ENCODE measurements at regions of chr10 and their contacts with region 1.

Region 1: DNA sequence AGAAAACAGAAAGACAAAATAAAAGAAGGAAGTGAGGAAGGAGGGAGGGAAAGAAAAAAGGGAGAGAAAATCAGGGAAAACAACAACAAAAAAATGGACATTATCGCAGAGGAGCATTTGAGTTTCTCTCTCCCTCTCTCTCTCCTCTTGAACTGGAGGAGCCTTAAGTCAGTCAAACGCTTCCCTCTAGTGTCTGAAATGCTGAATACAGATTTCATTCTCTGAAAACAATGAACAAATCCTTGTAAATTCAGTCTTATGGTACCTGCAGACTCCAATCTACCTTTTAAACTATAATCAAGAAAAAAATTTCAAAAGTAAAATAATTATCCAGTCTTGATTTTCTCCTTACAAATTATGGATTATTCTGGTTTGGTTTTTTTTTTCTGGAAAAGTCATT is 89.2 kb upstream of the PFKP start:
- DNase-seq: peak; percentile 50
- H3K4me3 ChIP-seq: no peak overlapping the region
- H3K27ac ChIP-seq: no peak overlapping the region
- H3K4me1 ChIP-seq: no peaks in the 10 kb centered on the region
- H3K27me3 ChIP-seq: no peaks in the 10 kb centered on the region
- CTCF ChIP-seq: peak; percentile 48 to 68

Region 2: GRCh38 chr10:1109795-1110673 is 1868.1 kb before region 1 on chr10:
- CTCF ChIA-PET with region 1: no interaction called
- dilution Hi-C with region 1: no loop called
- in situ Hi-C with region 1: no loop called
- intact Hi-C with region 1: loop called (anchors 1 kb)
- DNase-seq: peak; percentile 83
- H3K4me3 ChIP-seq: no peak overlapping the region
- H3K27ac ChIP-seq: peak overlapping the region; percentile 31
- H3K4me1 ChIP-seq: peaks cover 11% of the 10 kb centered on the region
- H3K27me3 ChIP-seq: no peaks in the 10 kb centered on the region
- CTCF ChIP-seq: peak; percentile 72 to 74

Region 3: GRCh38 chr10:2137549-2138174 is 840.4 kb before region 1 on chr10:
- CTCF ChIA-PET with region 1: no interaction called
- dilution Hi-C with region 1: no loop called
- in situ Hi-C with region 1: no loop called
- intact Hi-C with region 1: loop called (anchors 1 kb)
- DNase-seq: no peak
- H3K4me3 ChIP-seq: no peak overlapping the region
- H3K27ac ChIP-seq: no peak overlapping the region
- H3K4me1 ChIP-seq: no peaks in the 10 kb centered on the region
- H3K27me3 ChIP-seq: no peaks in the 10 kb centered on the region
- CTCF ChIP-seq: peak; percentile 61 to 72

Region 4: GRCh38 chr10:2927958-2928840 is 49.9 kb before region 1 on chr10:
- CTCF ChIA-PET with region 1: interaction called, 3 read pairs
- dilution Hi-C with region 1: no loop called
- in situ Hi-C with region 1: no loop called
- intact Hi-C with region 1: loop called (anchors 1 kb)
- DNase-seq: peak; percentile 32
- H3K4me3 ChIP-seq: no peak overlapping the region
- H3K27ac ChIP-seq: no peak overlapping the region
- H3K4me1 ChIP-seq: no peaks in the 10 kb centered on the region
- H3K27me3 ChIP-seq: no peaks in the 10 kb centered on the region
- CTCF ChIP-seq: peak; percentile 58 to 78

Region 5: GRCh38 chr10:2992401-2993198 is 14.5 kb after region 1 on chr10:
- CTCF ChIA-PET with region 1: no interaction called
- dilution Hi-C with region 1: no loop called
- in situ Hi-C with region 1: no loop called
- intact Hi-C with region 1: no loop called
- DNase-seq: no peak
- H3K4me3 ChIP-seq: no peak overlapping the region
- H3K27ac ChIP-seq: no peak overlapping the region
- H3K4me1 ChIP-seq: no peaks in the 10 kb centered on the region
- H3K27me3 ChIP-seq: no peaks in the 10 kb centered on the region
- CTCF ChIP-seq: no peak

Measured in mammary epithelial cell (primary cell).